Transverse colon (tissue), 4 donors: ENCODE measurements at regions of chr4 and their contacts with region 1.

Region 1: GRCh38 chr4:102344954-102345794 is at the start of gene SLC39A8:
- DNase-seq: peak; percentile 93
- H3K4me3 ChIP-seq: peak within 1 kb of the TSS; percentile 56 to 76 (median 70)
- H3K27ac ChIP-seq: peak within 1 kb of the TSS; percentile 85 to 93 (median 88)
- H3K4me1 ChIP-seq: peaks cover 3 to 43% (median 19%) of the 10 kb centered on the region in 4 donors
- H3K27me3 ChIP-seq: no peaks in the 10 kb centered on the region
- CTCF ChIP-seq: peak; percentile 81 to 94 (median 85)
- EP300 ChIP-seq: no peak
- POLR2A ChIP-seq: peak; percentile 85
- total RNA-seq, gene SLC39A8: 21.7 to 83.8 (median 42.6) TPM

Region 2: GRCh38 chr4:102328045-102328444 is 17.1 kb before region 1 on chr4:
- in situ Hi-C with region 1: no loop called
- intact Hi-C with region 1: no loop called
- DNase-seq: no peak
- H3K4me3 ChIP-seq: no peak overlapping the region
- H3K27ac ChIP-seq: no peak overlapping the region
- H3K4me1 ChIP-seq: peaks cover 0 to 5% (median 0%) of the 10 kb centered on the region in 4 donors
- H3K27me3 ChIP-seq: no peaks in the 10 kb centered on the region
- CTCF ChIP-seq: no peak
- EP300 ChIP-seq: no peak
- POLR2A ChIP-seq: no peak

Region 3: GRCh38 chr4:102430461-102430910 is 85.3 kb after region 1 on chr4:
- in situ Hi-C with region 1: loop called in 3 of 4 experiments (anchors 5 to 10 kb)
- intact Hi-C with region 1: no loop called
- DNase-seq: no peak
- H3K4me3 ChIP-seq: peak overlapping the region; percentile 44 to 86 (median 52)
- H3K27ac ChIP-seq: peak overlapping the region; percentile 72 to 81 (median 76)
- H3K4me1 ChIP-seq: peaks cover 0 to 10% (median 3%) of the 10 kb centered on the region in 4 donors
- H3K27me3 ChIP-seq: no peaks in the 10 kb centered on the region
- CTCF ChIP-seq: no peak
- EP300 ChIP-seq: no peak
- POLR2A ChIP-seq: no peak

Region 4: GRCh38 chr4:102439236-102439614 is 94.1 kb after region 1 on chr4:
- in situ Hi-C with region 1: loop called in 2 of 4 experiments (anchors 5 to 10 kb)
- intact Hi-C with region 1: no loop called
- DNase-seq: no peak
- H3K4me3 ChIP-seq: no peak overlapping the region
- H3K27ac ChIP-seq: peak overlapping the region; percentile 42 to 57 (median 50)
- H3K4me1 ChIP-seq: peaks cover 0 to 17% (median 11%) of the 10 kb centered on the region in 4 donors
- H3K27me3 ChIP-seq: no peaks in the 10 kb centered on the region
- CTCF ChIP-seq: no peak
- EP300 ChIP-seq: no peak
- POLR2A ChIP-seq: no peak

Region 5: DNA sequence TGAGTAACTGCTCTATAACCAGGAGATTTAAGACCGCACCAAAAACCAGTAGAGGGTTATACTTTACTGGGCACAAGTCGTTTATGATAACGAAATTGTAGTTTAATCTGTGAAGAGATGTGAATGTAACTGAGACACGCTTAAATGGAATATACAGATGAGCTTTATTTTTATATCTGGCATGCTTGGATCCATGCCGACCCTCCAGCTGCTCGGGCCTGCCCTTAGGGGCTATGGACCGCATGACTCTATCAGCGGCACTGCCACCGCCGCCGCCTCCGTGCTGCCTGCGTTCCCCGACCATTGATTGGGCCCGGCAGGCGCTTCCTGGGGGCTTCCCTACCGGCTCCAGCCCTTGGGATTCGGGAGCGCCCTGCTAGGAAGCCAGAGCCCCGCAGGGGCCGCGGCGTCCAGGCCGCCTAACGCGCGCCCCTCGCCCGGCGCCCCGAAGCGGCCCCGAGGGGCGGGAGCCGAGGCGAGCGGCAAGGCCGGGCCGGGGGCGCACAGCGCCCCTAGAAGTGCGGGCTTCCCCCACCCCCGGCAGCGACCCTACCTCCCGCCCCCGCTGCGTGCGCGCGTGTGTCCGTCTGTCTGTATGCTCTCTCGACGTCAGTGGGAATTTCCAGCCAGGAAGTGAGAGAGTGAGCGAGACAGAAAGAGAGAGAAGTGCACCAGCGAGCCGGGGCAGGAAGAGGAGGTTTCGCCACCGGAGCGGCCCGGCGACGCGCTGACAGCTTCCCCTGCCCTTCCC is 155.7 kb after region 1 on chr4 and contains the start of gene NFKB1:
- in situ Hi-C with region 1: loop called in 1 of 4 experiments (anchors 10 kb)
- intact Hi-C with region 1: no loop called
- DNase-seq: peak; percentile 73
- H3K4me3 ChIP-seq: peak within 1 kb of the TSS; percentile 77 to 95 (median 78)
- H3K27ac ChIP-seq: peak within 1 kb of the TSS; percentile 93 to 99 (median 98)
- H3K4me1 ChIP-seq: peaks cover 21 to 47% (median 32%) of the 10 kb centered on the region in 4 donors
- H3K27me3 ChIP-seq: no peaks in the 10 kb centered on the region
- CTCF ChIP-seq: peak in 2 of 5 experiments; percentile 3 to 5
- EP300 ChIP-seq: no peak
- POLR2A ChIP-seq: peak; percentile 19
- total RNA-seq, gene NFKB1: 20.9 to 35.8 (median 25.2) TPM